Breast epithelium (tissue), 4 donors: ENCODE measurements at regions of chr11 and their contacts with region 1.

Region 1: GRCh38 chr11:66324626-66325025 is 7.8 kb upstream of the CD248 start:
- DNase-seq: no peak
- H3K4me3 ChIP-seq: no peak overlapping the region
- H3K27ac ChIP-seq: peak overlapping the region in 1 of 2 donors; percentile 91
- H3K4me1 ChIP-seq: peaks cover 3% of the 10 kb centered on the region in 2 donors
- H3K27me3 ChIP-seq: no peaks in the 10 kb centered on the region
- CTCF ChIP-seq: no peak
- POLR2A ChIP-seq: no peak

Region 2: DNA sequence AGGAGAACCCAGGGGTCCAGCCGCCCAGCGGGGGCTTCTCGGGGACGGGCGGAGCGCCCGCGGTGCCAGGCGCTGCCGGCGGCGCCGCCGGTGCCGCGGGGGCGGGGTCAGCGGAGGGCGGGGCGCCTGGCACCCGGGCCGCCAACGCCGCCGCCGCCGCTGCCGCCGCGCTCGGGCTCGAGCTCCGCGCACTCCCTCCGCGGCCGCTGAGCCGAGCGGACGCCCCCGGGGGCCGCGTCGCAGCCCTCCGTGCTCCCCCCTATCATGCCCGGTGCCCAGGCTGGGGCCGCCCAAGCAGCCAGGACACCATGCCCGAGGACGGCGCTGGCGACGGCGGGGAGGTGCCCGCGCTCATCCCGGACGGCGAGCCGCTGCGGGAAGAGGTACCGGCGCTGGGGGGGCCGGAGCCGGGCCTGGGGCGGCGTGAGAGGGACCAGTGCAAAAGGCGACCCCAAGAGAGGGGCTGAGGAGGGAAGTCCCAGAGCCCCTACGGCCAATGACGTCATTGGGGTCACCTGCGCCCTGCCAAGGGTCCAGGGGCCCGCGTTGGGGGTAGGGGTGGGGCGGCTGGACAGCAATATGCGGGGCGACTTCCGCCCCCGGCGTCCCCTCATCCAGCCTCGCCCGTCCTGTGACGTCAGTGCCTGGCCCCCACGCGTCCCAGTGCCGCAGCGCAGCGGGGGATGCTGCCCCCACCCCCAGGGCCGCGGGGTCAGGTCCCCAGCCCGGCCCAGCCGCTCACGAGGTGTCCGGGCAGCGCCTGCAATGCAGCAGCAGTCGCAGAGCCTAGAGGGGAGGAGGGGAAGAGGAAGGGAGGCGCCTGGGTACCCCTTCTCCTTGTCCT is 32.7 kb before region 1 on chr11 and contains the start of gene TMEM151A:
- intact Hi-C with region 1: loop called (anchors 1 kb)
- DNase-seq: no peak
- H3K4me3 ChIP-seq: peak within 1 kb of the TSS; percentile 32 to 66 (median 42)
- H3K27ac ChIP-seq: no peak within 1 kb of the TSS
- H3K4me1 ChIP-seq: peaks cover 0 to 15% of the 10 kb centered on the region in 2 donors
- H3K27me3 ChIP-seq: peaks cover 5 to 39% of the 10 kb centered on the region in 2 donors
- CTCF ChIP-seq: no peak
- POLR2A ChIP-seq: no peak
- total RNA-seq, gene TMEM151A: 0.16 to 1.6 (median 0.33) TPM

Region 3: DNA sequence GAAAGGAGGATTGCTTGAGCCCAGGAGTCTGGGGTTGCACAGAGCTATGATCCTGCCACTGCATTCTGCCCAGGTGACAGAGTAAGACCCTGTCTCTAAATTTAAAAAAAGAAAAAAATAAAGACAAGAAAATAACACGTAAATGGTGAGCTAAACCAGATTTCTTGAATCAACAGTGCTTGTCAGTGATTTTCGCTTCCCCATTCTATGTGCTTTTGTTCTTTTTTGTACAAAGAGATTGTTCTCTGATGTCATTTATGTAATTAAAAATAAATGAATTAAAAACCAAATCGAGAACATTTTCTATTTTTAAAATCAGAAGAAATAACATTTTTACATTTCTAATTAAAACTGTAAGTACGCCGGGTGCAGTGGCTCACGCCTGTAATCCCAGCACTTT is 66.7 kb after region 1 on chr11:
- intact Hi-C with region 1: no loop called
- DNase-seq: no peak
- H3K4me3 ChIP-seq: no peak overlapping the region
- H3K27ac ChIP-seq: no peak overlapping the region
- H3K4me1 ChIP-seq: no peaks in the 10 kb centered on the region
- H3K27me3 ChIP-seq: peaks cover 0 to 3% of the 10 kb centered on the region in 2 donors
- CTCF ChIP-seq: no peak
- POLR2A ChIP-seq: no peak